ENCODE measurements at regions of chr16 and their contacts with region 1.

Region 1: GRCh38 chr16:50152807-50153452 is at the start of gene TENT4B:
- DNase-seq: peak; percentile 84 to 96 (median 90)
- ATAC-seq: peak; percentile 80
- H3K4me3 ChIP-seq: peak within 1 kb of the TSS; percentile 77
- H3K4me3 Mint-ChIP-seq: peak within 1 kb of the TSS; percentile 94
- H3K27ac ChIP-seq: peak within 1 kb of the TSS; percentile 84 to 90
- H3K27ac Mint-ChIP-seq: peak within 1 kb of the TSS; percentile 92
- H3K4me1 ChIP-seq: peaks cover 47% of the 10 kb centered on the region
- H3K4me1 Mint-ChIP-seq: peaks cover 38% of the 10 kb centered on the region
- H3K27me3 ChIP-seq: no peaks in the 10 kb centered on the region
- H3K27me3 Mint-ChIP-seq: no peaks in the 10 kb centered on the region
- CTCF ChIP-seq: no peak
- total RNA-seq, gene TENT4B: 32.9 to 35.0 TPM

Region 2: GRCh38 chr16:49932946-49933345 is 220.0 kb before region 1 on chr16:
- CTCF ChIA-PET with region 1: no interaction called
- POLR2A ChIA-PET with region 1: no interaction called
- intact Hi-C with region 1: no loop called
- DNase-seq: no peak
- ATAC-seq: no peak
- H3K4me3 ChIP-seq: no peak overlapping the region
- H3K4me3 Mint-ChIP-seq: no peak overlapping the region
- H3K27ac ChIP-seq: no peak overlapping the region
- H3K27ac Mint-ChIP-seq: no peak overlapping the region
- H3K4me1 ChIP-seq: no peaks in the 10 kb centered on the region
- H3K4me1 Mint-ChIP-seq: no peaks in the 10 kb centered on the region
- H3K27me3 ChIP-seq: peaks cover 6 to 13% of the 10 kb centered on the region in 2 experiments
- H3K27me3 Mint-ChIP-seq: peaks cover 29% of the 10 kb centered on the region
- CTCF ChIP-seq: no peak

Region 3: GRCh38 chr16:50024684-50025536 is 128.0 kb before region 1 on chr16 and contains the start of gene CNEP1R1:
- CTCF ChIA-PET with region 1: interaction called, 6 read pairs
- POLR2A ChIA-PET with region 1: interaction called, 15 read pairs
- intact Hi-C with region 1: loop called (anchors 1 to 10 kb)
- DNase-seq: peak; percentile 83 to 97 (median 91)
- ATAC-seq: peak; percentile 90
- H3K4me3 ChIP-seq: peak within 1 kb of the TSS; percentile 90
- H3K4me3 Mint-ChIP-seq: peak within 1 kb of the TSS; percentile 94
- H3K27ac ChIP-seq: peak within 1 kb of the TSS; percentile 58
- H3K27ac Mint-ChIP-seq: peak within 1 kb of the TSS; percentile 90
- H3K4me1 ChIP-seq: peaks cover 25% of the 10 kb centered on the region
- H3K4me1 Mint-ChIP-seq: peaks cover 38% of the 10 kb centered on the region
- H3K27me3 ChIP-seq: no peaks in the 10 kb centered on the region
- H3K27me3 Mint-ChIP-seq: no peaks in the 10 kb centered on the region
- CTCF ChIP-seq: peak; percentile 99
- total RNA-seq, gene CNEP1R1: 36.6 to 46.3 TPM

Region 4: DNA sequence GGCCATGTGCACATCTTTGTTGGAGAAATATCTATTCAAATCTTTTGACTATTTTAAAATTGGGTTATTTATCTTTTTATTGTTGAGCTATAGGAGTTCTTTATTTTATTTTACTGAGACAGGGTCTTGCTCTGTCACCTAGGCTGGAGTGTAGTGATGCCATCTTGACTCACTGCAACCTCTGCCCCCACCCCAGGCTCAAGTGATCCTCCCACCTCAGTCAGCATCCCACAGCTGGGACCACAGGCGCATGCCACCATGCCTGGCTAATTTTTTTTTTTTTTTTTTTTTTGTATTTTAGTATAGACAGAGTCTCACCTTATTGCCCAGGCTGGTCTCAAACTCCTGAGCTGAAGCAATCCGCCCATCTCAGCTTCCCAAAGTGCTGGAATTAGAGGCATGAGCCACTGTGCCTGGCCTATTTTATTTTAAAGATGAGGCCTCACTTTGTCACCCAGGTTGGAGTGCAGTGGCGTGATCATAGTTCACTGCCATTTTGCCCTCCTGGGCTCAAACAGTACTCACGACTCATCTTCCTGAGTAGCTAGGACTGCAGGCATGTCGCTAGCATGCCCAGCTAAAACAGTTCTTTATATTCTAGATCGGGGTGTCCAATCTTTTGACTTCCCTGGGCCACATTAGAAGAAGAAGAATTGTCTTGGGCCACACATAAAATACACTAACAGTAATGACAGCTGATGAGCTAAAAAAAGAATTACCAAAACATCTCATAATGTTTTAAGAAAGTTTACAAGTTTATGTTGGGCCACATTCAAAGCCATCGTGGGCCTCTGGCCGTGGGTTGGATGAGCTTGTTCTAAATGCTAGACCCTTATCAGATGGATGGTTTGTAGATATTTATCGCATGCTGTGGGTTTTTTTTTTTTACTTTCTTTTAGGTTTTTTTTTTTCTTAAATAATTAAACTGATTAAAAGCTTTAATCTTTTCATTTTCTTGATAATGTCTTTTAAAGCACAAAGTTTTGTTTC is 13.9 kb after region 1 on chr16:
- CTCF ChIA-PET with region 1: interaction called, 4 read pairs
- POLR2A ChIA-PET with region 1: interaction called, 24 read pairs
- intact Hi-C with region 1: no loop called
- DNase-seq: peak in 1 of 14 experiments; percentile 16
- ATAC-seq: no peak
- H3K4me3 ChIP-seq: no peak overlapping the region
- H3K4me3 Mint-ChIP-seq: peak overlapping the region; percentile 13
- H3K27ac ChIP-seq: no peak overlapping the region
- H3K27ac Mint-ChIP-seq: peak overlapping the region; percentile 57
- H3K4me1 ChIP-seq: peaks cover 24% of the 10 kb centered on the region
- H3K4me1 Mint-ChIP-seq: peaks cover 64% of the 10 kb centered on the region
- H3K27me3 ChIP-seq: no peaks in the 10 kb centered on the region
- H3K27me3 Mint-ChIP-seq: no peaks in the 10 kb centered on the region
- CTCF ChIP-seq: no peak

Region 5: GRCh38 chr16:50210266-50211038 is 57.5 kb after region 1 on chr16:
- CTCF ChIA-PET with region 1: interaction called, 9 read pairs
- POLR2A ChIA-PET with region 1: interaction called, 9 read pairs
- intact Hi-C with region 1: loop called (anchors 2 to 5 kb)
- DNase-seq: peak; percentile 42 to 79 (median 58)
- ATAC-seq: peak; percentile 92
- H3K4me3 ChIP-seq: no peak overlapping the region
- H3K4me3 Mint-ChIP-seq: no peak overlapping the region
- H3K27ac ChIP-seq: peak overlapping the region in 1 of 2 donors; percentile 26
- H3K27ac Mint-ChIP-seq: peak overlapping the region; percentile 32
- H3K4me1 ChIP-seq: peaks cover 9% of the 10 kb centered on the region
- H3K4me1 Mint-ChIP-seq: peaks cover 50% of the 10 kb centered on the region
- H3K27me3 ChIP-seq: no peaks in the 10 kb centered on the region
- H3K27me3 Mint-ChIP-seq: no peaks in the 10 kb centered on the region
- CTCF ChIP-seq: peak; percentile 64

Region 6: GRCh38 chr16:50273681-50274325 is 120.9 kb after region 1 on chr16:
- CTCF ChIA-PET with region 1: no interaction called
- POLR2A ChIA-PET with region 1: interaction called, 5 read pairs
- intact Hi-C with region 1: loop called (anchors 5 to 10 kb)
- DNase-seq: peak in 12 of 14 experiments; percentile 23 to 72 (median 34)
- ATAC-seq: peak; percentile 51
- H3K4me3 ChIP-seq: peak overlapping the region; percentile 73
- H3K4me3 Mint-ChIP-seq: peak overlapping the region; percentile 95
- H3K27ac ChIP-seq: peak overlapping the region; percentile 91 to 93
- H3K27ac Mint-ChIP-seq: peak overlapping the region; percentile 100
- H3K4me1 ChIP-seq: peaks cover 97% of the 10 kb centered on the region
- H3K4me1 Mint-ChIP-seq: peaks cover 99% of the 10 kb centered on the region
- H3K27me3 ChIP-seq: no peaks in the 10 kb centered on the region
- H3K27me3 Mint-ChIP-seq: no peaks in the 10 kb centered on the region
- CTCF ChIP-seq: no peak

Region 7: GRCh38 chr16:50548125-50548908 is 395.4 kb after region 1 on chr16 and contains the start of gene NKD1:
- CTCF ChIA-PET with region 1: no interaction called
- POLR2A ChIA-PET with region 1: no interaction called
- intact Hi-C with region 1: loop called in 1 of 2 experiments (anchors 5 kb)
- DNase-seq: peak; percentile 56 to 89 (median 71)
- ATAC-seq: peak; percentile 66
- H3K4me3 ChIP-seq: peak within 1 kb of the TSS; percentile 75
- H3K4me3 Mint-ChIP-seq: peak within 1 kb of the TSS; percentile 93
- H3K27ac ChIP-seq: peak within 1 kb of the TSS in 1 of 2 donors; percentile 65
- H3K27ac Mint-ChIP-seq: peak within 1 kb of the TSS; percentile 88
- H3K4me1 ChIP-seq: peaks cover 39% of the 10 kb centered on the region
- H3K4me1 Mint-ChIP-seq: peaks cover 48% of the 10 kb centered on the region
- H3K27me3 ChIP-seq: no peaks in the 10 kb centered on the region
- H3K27me3 Mint-ChIP-seq: no peaks in the 10 kb centered on the region
- CTCF ChIP-seq: no peak
- total RNA-seq, gene NKD1: 6.1 to 9.8 TPM

Measured in CD4-positive, alpha-beta T cell (primary cell).